ENCODE measurements at regions of chr11 and their contacts with region 1.

Region 1: GRCh38 chr11:91608677-91609076 is 615.9 kb upstream of the FAT3 start:
- DNase-seq: no peak
- ATAC-seq: no peak
- H3K4me3 ChIP-seq: no peak overlapping the region
- H3K27ac ChIP-seq: no peak overlapping the region
- H3K4me1 ChIP-seq: no peaks in the 10 kb centered on the region
- H3K27me3 ChIP-seq: no peaks in the 10 kb centered on the region
- CTCF ChIP-seq: no peak
- POLR2A ChIP-seq: no peak

Region 2: DNA sequence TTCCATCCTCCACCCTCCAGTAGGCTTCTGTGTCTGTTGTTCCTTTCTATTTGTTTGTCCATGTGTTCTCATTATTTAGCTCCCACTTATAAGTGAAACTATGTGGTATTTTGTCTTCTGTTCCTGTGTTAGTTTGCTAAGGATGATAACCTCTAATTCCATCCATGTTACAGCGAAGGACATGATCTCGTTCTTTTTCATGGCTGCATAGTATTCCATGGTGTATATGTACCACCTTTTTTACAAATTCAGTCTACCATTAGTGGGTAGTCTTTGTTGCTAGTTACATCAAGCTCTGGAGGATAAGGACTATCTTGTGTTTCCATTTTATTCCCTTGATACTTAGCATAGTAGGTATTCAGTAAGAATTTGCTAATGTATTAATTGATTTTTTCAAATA is 48.2 kb before region 1 on chr11:
- intact Hi-C with region 1: no loop called
- DNase-seq: no peak
- ATAC-seq: no peak
- H3K4me3 ChIP-seq: no peak overlapping the region
- H3K27ac ChIP-seq: no peak overlapping the region
- H3K4me1 ChIP-seq: no peaks in the 10 kb centered on the region
- H3K27me3 ChIP-seq: no peaks in the 10 kb centered on the region
- CTCF ChIP-seq: no peak
- POLR2A ChIP-seq: no peak

Region 3: DNA sequence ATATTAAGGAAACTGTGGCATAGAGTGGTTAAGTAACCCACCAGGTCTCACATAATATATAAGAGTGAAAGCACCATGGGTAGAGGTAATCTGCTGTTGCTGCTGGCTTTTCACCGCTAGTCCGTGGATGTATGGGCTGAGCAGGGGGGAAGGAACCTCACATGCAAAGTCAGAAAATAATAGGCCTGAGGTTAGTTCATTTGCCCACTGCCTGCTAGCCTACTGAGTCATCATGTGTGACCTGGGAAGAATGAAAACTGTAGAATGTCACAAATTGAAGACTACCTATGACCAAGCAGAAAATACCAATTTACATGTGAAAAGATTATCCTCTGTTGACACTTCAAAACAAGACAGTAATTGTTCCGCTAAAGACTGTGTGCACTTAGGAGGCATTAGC is 55.8 kb after region 1 on chr11:
- intact Hi-C with region 1: loop called in 1 of 10 experiments (anchors 2 kb)
- DNase-seq: no peak
- ATAC-seq: no peak
- H3K4me3 ChIP-seq: no peak overlapping the region
- H3K27ac ChIP-seq: no peak overlapping the region
- H3K4me1 ChIP-seq: no peaks in the 10 kb centered on the region
- H3K27me3 ChIP-seq: no peaks in the 10 kb centered on the region
- CTCF ChIP-seq: no peak
- POLR2A ChIP-seq: no peak

Measured in heart left ventricle (tissue), 16 donors.